ENCODE measurements at regions of chr1 and their contacts with region 1.

Region 1: DNA sequence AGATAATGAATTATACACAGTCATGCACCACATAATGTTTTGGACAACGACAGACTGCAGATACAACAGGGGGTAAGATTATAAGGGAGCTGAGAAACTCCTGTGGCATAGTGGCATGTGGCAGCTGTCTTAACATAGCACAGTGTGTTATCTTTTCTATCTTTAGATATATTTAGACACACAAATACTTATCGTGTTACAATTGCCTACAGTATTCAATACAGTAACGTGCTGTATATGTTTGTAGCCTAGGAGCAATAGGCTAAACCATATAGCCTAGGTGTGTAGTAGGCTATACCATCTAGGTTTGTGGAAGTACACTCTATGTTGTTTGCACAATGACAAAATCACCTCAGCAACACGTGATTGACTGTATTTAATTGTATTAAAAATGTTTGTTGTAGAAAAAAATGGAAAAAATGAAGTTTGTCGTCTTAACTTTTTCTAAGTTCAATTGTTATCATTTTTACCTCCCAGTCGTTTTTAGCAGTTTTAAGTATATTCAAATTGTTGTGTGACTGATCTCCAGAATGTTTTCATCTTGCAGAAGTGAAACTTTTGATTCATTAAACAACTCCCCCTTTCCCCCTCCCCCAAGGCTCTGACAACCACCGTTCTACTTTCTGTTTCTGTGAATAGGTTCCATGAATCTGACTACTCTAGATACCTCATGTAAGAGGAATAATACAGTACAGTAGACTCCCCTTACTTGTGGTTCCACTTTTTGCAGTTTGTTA is 351.0 kb upstream of the B3GALT2 start:
- DNase-seq: peak; percentile 90
- H3K4me3 ChIP-seq: peak overlapping the region; percentile 53
- H3K27ac ChIP-seq: peak overlapping the region; percentile 78
- H3K4me1 ChIP-seq: peaks cover 50% of the 10 kb centered on the region
- CTCF ChIP-seq: no peak

Region 2: DNA sequence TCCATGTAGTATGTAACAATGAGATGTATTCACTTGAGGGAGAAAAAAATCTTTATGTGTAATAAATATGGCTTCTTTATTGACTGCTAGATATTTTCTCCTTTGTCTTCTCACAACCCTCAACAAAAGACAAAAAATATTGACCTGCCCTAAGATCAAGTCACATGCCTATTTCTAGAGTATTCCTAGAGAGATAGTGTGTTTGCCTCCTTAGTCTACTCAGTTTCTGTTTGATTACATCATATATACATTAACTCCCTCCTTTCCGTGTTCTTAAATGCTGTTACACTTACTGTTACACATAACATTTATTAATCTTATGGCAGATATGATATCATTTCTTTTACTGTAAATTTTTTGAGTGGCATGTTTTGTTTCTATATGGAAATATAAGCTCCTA is 1660.8 kb before region 1 on chr1:
- CTCF ChIA-PET with region 1: no interaction called
- POLR2A ChIA-PET with region 1: no interaction called
- intact Hi-C with region 1: no loop called
- DNase-seq: no peak
- H3K4me3 ChIP-seq: no peak overlapping the region
- H3K27ac ChIP-seq: no peak overlapping the region
- H3K4me1 ChIP-seq: no peaks in the 10 kb centered on the region
- CTCF ChIP-seq: no peak

Region 3: DNA sequence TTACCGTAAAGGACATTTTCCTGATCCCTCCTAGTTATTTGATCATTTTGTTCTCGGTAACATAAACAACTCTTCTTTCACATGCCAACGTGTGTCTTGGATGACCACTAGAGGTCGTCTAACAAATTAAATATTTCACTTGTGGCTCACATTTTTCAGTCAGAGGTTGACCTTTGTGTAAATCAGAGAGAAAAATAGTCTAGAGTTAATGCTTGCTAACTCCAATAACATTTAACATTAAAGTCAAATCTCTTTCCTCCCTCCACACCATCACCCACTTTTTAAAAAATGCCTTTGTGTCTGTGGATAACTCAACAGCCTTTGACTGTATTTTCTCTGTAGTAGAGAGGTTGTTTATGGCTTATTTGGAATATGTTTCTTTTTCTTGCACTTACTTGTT is 130.5 kb before region 1 on chr1:
- CTCF ChIA-PET with region 1: no interaction called
- POLR2A ChIA-PET with region 1: no interaction called
- intact Hi-C with region 1: loop called (anchors 5 kb)
- DNase-seq: peak; percentile 77
- H3K4me3 ChIP-seq: no peak overlapping the region
- H3K27ac ChIP-seq: no peak overlapping the region
- H3K4me1 ChIP-seq: no peaks in the 10 kb centered on the region
- CTCF ChIP-seq: peak; percentile 97

Region 4: DNA sequence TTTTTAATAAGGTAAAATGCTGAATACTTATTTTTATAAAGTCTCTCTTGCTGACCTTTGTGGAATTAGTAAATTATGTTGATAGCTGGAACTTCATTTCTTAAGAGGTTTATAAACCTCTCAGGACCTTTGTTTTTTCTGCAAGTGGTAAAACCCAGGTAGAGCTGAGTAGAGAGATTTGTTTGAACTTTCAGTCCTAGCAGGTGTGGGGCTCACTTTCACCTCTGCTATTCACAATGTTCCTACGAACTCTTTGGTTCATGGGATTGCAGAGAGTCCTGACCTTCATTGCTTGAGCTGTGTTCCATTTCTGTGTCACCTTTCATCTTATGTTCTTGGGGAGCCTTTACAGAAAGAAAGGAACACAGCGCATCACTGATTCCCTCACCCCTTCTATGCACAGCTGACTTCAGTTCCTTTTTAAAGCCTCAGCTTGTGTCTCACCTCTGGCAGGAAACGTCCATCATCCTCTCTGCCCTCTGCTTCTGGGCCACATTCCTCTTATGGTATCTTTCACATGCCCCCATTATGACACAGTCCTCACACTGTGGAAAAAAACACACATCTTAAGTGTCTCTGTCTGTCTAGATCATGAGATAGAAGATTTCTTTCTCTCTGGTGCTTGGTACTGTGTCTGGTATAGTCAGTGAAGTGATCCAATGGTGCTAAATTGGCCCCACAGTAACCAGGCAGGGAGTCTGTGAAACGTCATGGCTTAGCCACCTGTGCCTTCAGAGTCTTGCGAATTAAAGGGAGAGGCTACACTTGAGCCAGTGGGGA is 88.6 kb before region 1 on chr1:
- CTCF ChIA-PET with region 1: no interaction called
- POLR2A ChIA-PET with region 1: interaction called, 4 read pairs
- intact Hi-C with region 1: loop called (anchors 1 kb)
- DNase-seq: peak; percentile 84
- H3K4me3 ChIP-seq: peak overlapping the region; percentile 46
- H3K27ac ChIP-seq: peak overlapping the region; percentile 90
- H3K4me1 ChIP-seq: peaks cover 36% of the 10 kb centered on the region
- CTCF ChIP-seq: no peak

Region 5: DNA sequence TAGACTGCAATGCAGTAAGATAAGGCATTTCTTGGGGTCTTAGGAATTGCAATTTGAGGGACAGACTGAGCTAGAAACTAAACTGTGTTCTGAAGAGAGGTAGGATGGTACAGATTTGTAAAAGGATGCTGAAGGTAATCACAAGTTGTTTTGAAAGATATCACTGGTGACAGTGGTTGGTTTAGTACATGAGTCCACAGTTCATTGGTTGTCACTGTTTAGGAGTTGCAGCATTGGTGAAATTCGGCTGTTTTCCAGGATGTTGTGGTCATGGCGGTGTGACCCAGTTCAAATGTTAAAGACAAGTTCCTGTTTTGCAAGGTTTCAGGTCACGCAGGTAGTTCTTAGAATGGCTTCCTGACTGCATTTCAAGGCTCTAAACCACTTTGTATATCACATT is 58.2 kb before region 1 on chr1:
- CTCF ChIA-PET with region 1: no interaction called
- POLR2A ChIA-PET with region 1: interaction called, 6 read pairs
- intact Hi-C with region 1: loop called (anchors 2 kb)
- DNase-seq: peak; percentile 87
- H3K4me3 ChIP-seq: no peak overlapping the region
- H3K27ac ChIP-seq: no peak overlapping the region
- H3K4me1 ChIP-seq: peaks cover 19% of the 10 kb centered on the region
- CTCF ChIP-seq: no peak

Region 6: GRCh38 chr1:193549081-193549480 is 11.6 kb after region 1 on chr1:
- CTCF ChIA-PET with region 1: no interaction called
- POLR2A ChIA-PET with region 1: interaction called, 11 read pairs
- intact Hi-C with region 1: no loop called
- DNase-seq: no peak
- H3K4me3 ChIP-seq: no peak overlapping the region
- H3K27ac ChIP-seq: no peak overlapping the region
- H3K4me1 ChIP-seq: no peaks in the 10 kb centered on the region
- CTCF ChIP-seq: no peak

Region 7: DNA sequence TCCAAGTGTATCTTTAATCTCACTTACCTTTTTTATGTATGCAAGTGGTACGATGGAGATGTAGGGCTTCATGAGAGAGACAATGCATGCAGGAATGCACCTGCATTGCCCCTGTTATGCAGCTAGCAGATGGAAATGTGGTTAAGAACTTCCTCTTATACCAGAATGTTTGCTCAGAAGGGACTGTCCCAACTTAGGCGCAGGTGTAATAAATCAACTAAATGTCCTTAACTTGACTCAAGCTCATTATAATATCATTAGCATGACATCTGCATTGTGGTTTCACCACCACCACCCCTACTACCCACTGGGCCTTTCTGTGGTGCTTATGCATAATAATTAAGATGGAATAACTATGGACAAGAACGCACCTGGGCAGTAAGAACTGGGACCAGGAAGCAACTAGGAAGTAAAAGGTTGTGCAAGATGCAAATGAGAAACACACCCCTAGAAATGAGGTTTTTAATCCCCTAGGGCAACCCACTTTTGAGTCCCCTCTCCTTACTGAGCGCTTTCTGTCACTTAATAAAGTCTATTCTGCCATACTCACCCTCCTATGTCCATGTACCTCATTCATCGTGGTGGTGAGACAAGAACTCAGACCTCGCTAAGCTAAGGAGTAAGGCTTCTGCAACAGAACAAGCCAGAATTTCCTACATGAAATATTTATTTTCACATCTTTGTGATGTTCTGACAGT is 752.3 kb after region 1 on chr1:
- CTCF ChIA-PET with region 1: no interaction called
- POLR2A ChIA-PET with region 1: interaction called, 3 read pairs
- intact Hi-C with region 1: loop called (anchors 5 kb)
- DNase-seq: peak; percentile 98
- H3K4me3 ChIP-seq: peak overlapping the region; percentile 73
- H3K27ac ChIP-seq: peak overlapping the region; percentile 96
- H3K4me1 ChIP-seq: peaks cover 48% of the 10 kb centered on the region
- CTCF ChIP-seq: no peak

Measured in OCI-LY7 (cell line).